Astrocyte of the cerebellum (primary cell): ENCODE measurements at regions of chr15 and their contacts with region 1.

Region 1: GRCh38 chr15:69060041-69060481 is 45.6 kb downstream of the NOX5 start:
- DNase-seq: no peak
- H3K4me3 ChIP-seq: no peak overlapping the region
- CTCF ChIP-seq: no peak

Region 2: DNA sequence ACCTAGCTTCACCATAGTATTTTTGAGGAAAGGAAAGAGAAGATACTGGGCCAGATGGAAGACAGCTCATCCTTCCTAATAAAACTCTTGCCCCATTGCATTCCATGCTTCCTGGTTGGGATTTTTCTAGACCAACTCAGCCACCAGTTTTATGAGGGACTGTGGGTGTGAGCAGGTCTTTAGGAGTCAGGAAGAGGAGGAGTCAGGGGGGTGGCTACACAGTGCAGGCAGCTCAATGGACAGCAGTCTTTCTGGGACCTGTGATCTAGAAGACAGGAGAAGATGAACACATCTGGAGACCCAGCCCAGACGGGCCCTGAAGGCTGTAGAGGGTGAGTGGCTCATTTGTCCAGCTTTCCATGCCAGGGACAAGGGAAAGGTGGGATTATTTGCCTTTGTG is 45.6 kb before region 1 on chr15 and contains the start of gene NOX5:
- in situ Hi-C with region 1: no loop called
- DNase-seq: no peak
- H3K4me3 ChIP-seq: no peak within 1 kb of the TSS
- CTCF ChIP-seq: no peak

Region 3: DNA sequence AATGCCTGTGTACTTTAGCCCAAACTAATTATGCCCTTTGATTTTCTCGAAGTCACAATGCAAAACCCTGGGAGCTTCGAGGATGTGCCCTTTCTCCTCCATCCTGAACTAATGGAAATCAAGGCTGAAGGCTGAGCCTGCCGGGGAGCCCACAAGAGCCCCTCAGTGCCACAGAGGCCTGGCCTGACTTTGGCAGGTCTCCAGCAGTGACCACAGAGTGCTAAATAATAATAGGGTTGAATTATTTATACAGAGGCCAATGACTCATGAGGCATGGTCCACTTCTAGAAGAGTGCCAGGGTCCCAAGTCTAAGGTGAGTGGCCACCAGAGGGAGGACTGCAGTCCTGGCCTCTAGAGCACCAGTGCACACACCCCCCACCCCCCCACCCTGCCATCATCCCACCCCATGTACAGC is 81.2 kb after region 1 on chr15:
- in situ Hi-C with region 1: no loop called
- DNase-seq: no peak
- H3K4me3 ChIP-seq: no peak overlapping the region
- CTCF ChIP-seq: peak; percentile 2

Region 4: GRCh38 chr15:69244798-69245197 is 184.7 kb after region 1 on chr15:
- in situ Hi-C with region 1: loop called (anchors 5 kb)
- DNase-seq: no peak
- H3K4me3 ChIP-seq: no peak overlapping the region
- CTCF ChIP-seq: no peak